ENCODE measurements at regions of chr11 and their contacts with region 1.

Region 1: GRCh38 chr11:777288-778255 is at the start of gene GATD1:
- DNase-seq: peak; percentile 86 to 99 (median 93)
- ATAC-seq: peak; percentile 86 to 89
- H3K4me3 Mint-ChIP-seq: peak within 1 kb of the TSS; percentile 72 to 92 (median 82)
- H3K27ac Mint-ChIP-seq: peak within 1 kb of the TSS in 8 of 10 donors; percentile 43 to 90 (median 80)
- H3K4me1 Mint-ChIP-seq: peaks cover 5 to 42% (median 22%) of the 10 kb centered on the region in 4 donors
- H3K27me3 Mint-ChIP-seq: no peaks in the 10 kb centered on the region
- polyA plus RNA-seq, gene GATD1: 7.2 to 20.7 (median 12.8) TPM

Region 2: GRCh38 chr11:809287-810039 is 31.9 kb after region 1 on chr11 and contains the start of gene RPLP2:
- POLR2A ChIA-PET with region 1: interaction called, 12 read pairs
- DNase-seq: peak; percentile 95 to 100 (median 98)
- ATAC-seq: peak; percentile 82 to 87
- H3K4me3 Mint-ChIP-seq: peak within 1 kb of the TSS; percentile 88 to 98 (median 92)
- H3K27ac Mint-ChIP-seq: peak within 1 kb of the TSS; percentile 93 to 99 (median 99)
- H3K4me1 Mint-ChIP-seq: peaks cover 10 to 47% (median 39%) of the 10 kb centered on the region in 4 donors
- H3K27me3 Mint-ChIP-seq: no peaks in the 10 kb centered on the region
- polyA plus RNA-seq, gene RPLP2: 4,080 to 5,338 (median 4,376) TPM

Region 3: DNA sequence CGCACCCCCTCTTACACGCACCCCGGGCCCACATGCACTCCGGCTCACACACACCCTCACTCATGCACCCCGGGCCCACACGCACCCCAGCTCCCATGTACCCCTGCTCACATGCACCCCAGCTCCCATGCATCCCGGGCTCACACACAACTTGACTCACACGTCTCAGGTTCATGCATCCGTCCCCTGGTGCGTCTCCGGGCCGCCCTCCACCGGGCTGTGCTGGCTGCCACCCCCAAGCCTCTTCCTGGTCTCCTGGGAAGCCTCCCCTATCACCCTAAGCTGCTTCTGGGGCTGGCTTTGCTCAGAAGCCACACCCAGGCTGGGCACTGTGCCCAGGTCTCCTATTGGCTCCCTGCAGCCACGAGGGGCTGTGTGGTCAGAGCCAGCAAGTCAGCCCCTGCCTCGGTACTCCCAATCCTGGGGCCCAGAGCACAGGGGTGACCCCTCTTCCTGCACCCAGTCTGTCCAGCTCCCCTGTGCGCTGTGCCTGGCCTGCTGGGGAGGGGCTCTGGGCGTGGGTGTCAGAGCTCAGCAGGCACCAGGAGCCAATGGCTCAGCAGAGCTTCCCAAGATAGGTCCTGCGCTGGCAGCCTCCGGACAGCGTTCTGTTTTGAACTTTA is 82.0 kb after region 1 on chr11:
- POLR2A ChIA-PET with region 1: no interaction called
- DNase-seq: no peak
- ATAC-seq: no peak
- H3K4me3 Mint-ChIP-seq: no peak overlapping the region
- H3K27ac Mint-ChIP-seq: no peak overlapping the region
- H3K4me1 Mint-ChIP-seq: peaks cover 5 to 11% (median 9%) of the 10 kb centered on the region in 4 donors
- H3K27me3 Mint-ChIP-seq: no peaks in the 10 kb centered on the region

Measured in naive thymus-derived CD8-positive, alpha-beta T cell (primary cell).